Activated CD4-positive, alpha-beta memory T cell treated with anti-CD3 and anti-CD28 coated beads, Interleukin-2, amount 10 ng/mL, durations not matched to agents 7 days and 5 days (primary cell): ENCODE measurements at regions of chr5 and their contacts with region 1.

Region 1: DNA sequence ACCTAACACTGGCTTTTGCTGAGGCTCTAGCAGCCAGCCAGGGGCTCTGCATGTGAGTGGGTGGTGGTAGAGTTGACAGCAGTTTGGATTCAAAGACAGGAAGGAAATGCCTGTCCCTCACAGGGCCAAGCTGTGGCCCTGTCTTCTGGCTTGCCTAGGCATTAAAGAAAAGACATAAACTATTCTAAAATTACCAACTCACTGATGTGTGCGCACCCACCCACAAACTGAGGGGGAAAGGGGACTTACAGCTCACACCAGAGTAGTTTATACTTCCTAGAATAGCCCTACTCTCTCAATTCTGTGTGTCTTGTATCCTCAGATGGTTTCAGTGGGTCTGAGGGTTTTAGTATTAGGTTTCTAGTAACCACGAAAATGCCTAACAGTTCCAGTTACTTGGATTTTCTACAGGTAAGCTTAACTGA is 18.3 kb upstream of the IL13 start:
- DNase-seq: peak; percentile 43
- H3K4me3 Mint-ChIP-seq: no peak overlapping the region
- H3K27ac Mint-ChIP-seq: peak overlapping the region; percentile 82
- H3K4me1 Mint-ChIP-seq: peaks cover 81% of the 10 kb centered on the region
- H3K27me3 Mint-ChIP-seq: no peaks in the 10 kb centered on the region

Region 2: DNA sequence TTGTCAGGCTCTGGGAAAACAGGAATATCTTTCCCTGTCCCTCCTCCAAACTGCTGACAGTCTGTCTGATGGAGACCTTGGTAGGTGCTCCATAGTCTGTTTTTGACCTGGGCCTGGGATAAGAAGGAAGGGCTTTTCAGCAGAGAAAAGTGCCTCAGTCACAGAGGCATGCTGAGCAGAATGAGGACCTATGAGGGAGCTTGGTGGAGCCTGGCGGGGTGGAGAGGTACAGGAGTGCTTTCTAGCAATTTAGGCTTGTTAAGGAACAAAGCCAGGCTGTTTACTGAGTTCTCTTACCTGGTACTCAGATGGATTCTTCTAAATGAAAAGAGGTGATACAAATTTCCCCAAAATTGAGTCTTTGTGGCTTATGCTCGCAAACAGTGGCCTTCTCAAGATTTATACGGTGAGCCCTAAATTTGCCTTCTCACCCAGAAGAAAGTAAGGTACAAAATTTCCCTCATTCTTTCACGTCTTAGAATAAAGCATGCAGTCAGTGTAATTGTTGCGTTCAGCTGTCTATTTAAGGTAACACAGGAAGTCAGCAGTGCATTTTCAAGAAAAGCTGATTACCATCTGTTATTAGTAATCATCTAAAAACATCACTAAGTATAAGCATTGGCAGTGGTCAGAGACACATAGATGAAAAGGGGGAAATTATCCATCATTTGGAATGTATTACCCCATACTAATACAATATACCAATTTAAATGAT is 10.3 kb before region 1 on chr5:
- CTCF ChIA-PET with region 1: interaction called, 4 read pairs
- POLR2A ChIA-PET with region 1: interaction called, 14 read pairs
- DNase-seq: no peak
- H3K4me3 Mint-ChIP-seq: peak overlapping the region; percentile 25
- H3K27ac Mint-ChIP-seq: peak overlapping the region; percentile 83
- H3K4me1 Mint-ChIP-seq: peaks cover 42% of the 10 kb centered on the region
- H3K27me3 Mint-ChIP-seq: no peaks in the 10 kb centered on the region

Region 3: GRCh38 chr5:132656774-132657355 is 17.1 kb after region 1 on chr5:
- CTCF ChIA-PET with region 1: interaction called, 3 read pairs
- POLR2A ChIA-PET with region 1: interaction called, 12 read pairs
- DNase-seq: no peak
- H3K4me3 Mint-ChIP-seq: peak overlapping the region; percentile 44
- H3K27ac Mint-ChIP-seq: peak overlapping the region; percentile 10
- H3K4me1 Mint-ChIP-seq: peaks cover 43% of the 10 kb centered on the region
- H3K27me3 Mint-ChIP-seq: peaks cover 22% of the 10 kb centered on the region